MCF 10A (cell line): ENCODE measurements at regions of chr22 and their contacts with region 1.

Region 1: GRCh38 chr22:50341977-50342650 is 1.0 kb upstream of the PPP6R2 start:
- DNase-seq: peak; percentile 90
- H3K4me3 Mint-ChIP-seq: peak overlapping the region; percentile 69
- H3K27ac Mint-ChIP-seq: no peak overlapping the region
- H3K4me1 Mint-ChIP-seq: no peaks in the 10 kb centered on the region
- H3K27me3 Mint-ChIP-seq: no peaks in the 10 kb centered on the region
- CTCF ChIP-seq: peak; percentile 92

Region 2: GRCh38 chr22:50244420-50245213 is 97.5 kb before region 1 on chr22 and contains the start of gene TUBGCP6:
- CTCF ChIA-PET with region 1: interaction called, 19 read pairs
- POLR2A ChIA-PET with region 1: interaction called, 26 read pairs
- intact Hi-C with region 1: loop called (anchors 1 kb)
- DNase-seq: peak; percentile 91
- H3K4me3 Mint-ChIP-seq: peak within 1 kb of the TSS; percentile 96
- H3K27ac Mint-ChIP-seq: peak within 1 kb of the TSS; percentile 99
- H3K4me1 Mint-ChIP-seq: peaks cover 16% of the 10 kb centered on the region
- H3K27me3 Mint-ChIP-seq: no peaks in the 10 kb centered on the region
- CTCF ChIP-seq: no peak
- total RNA-seq, gene TUBGCP6: 27.6 and 27.9 TPM in 2 replicates

Region 3: GRCh38 chr22:50269970-50270665 is 72.0 kb before region 1 on chr22 and contains the start of gene MAPK11:
- CTCF ChIA-PET with region 1: interaction called, 7 read pairs
- POLR2A ChIA-PET with region 1: interaction called, 8 read pairs
- intact Hi-C with region 1: loop called (anchors 1 kb)
- DNase-seq: no peak
- H3K4me3 Mint-ChIP-seq: peak within 1 kb of the TSS; percentile 60
- H3K27ac Mint-ChIP-seq: no peak within 1 kb of the TSS
- H3K4me1 Mint-ChIP-seq: peaks cover 12% of the 10 kb centered on the region
- H3K27me3 Mint-ChIP-seq: no peaks in the 10 kb centered on the region
- CTCF ChIP-seq: no peak
- total RNA-seq, gene MAPK11: 10.4 and 11.9 TPM in 2 replicates

Region 4: GRCh38 chr22:50282361-50282760 is 59.8 kb before region 1 on chr22:
- CTCF ChIA-PET with region 1: interaction called, 11 read pairs
- POLR2A ChIA-PET with region 1: no interaction called
- intact Hi-C with region 1: loop called (anchors 2 kb)
- DNase-seq: peak; percentile 84
- H3K4me3 Mint-ChIP-seq: peak overlapping the region; percentile 44
- H3K27ac Mint-ChIP-seq: no peak overlapping the region
- H3K4me1 Mint-ChIP-seq: peaks cover 4% of the 10 kb centered on the region
- H3K27me3 Mint-ChIP-seq: no peaks in the 10 kb centered on the region
- CTCF ChIP-seq: no peak

Region 5: GRCh38 chr22:50326959-50327710 is 15.0 kb before region 1 on chr22 and contains the start of gene DENND6B:
- CTCF ChIA-PET with region 1: interaction called, 22 read pairs
- POLR2A ChIA-PET with region 1: interaction called, 3 read pairs
- intact Hi-C with region 1: no loop called
- DNase-seq: peak; percentile 68
- H3K4me3 Mint-ChIP-seq: peak within 1 kb of the TSS; percentile 84
- H3K27ac Mint-ChIP-seq: peak within 1 kb of the TSS; percentile 49
- H3K4me1 Mint-ChIP-seq: peaks cover 18% of the 10 kb centered on the region
- H3K27me3 Mint-ChIP-seq: no peaks in the 10 kb centered on the region
- CTCF ChIP-seq: peak; percentile 42
- total RNA-seq, gene DENND6B: 4.0 and 5.5 TPM in 2 replicates

Region 6: DNA sequence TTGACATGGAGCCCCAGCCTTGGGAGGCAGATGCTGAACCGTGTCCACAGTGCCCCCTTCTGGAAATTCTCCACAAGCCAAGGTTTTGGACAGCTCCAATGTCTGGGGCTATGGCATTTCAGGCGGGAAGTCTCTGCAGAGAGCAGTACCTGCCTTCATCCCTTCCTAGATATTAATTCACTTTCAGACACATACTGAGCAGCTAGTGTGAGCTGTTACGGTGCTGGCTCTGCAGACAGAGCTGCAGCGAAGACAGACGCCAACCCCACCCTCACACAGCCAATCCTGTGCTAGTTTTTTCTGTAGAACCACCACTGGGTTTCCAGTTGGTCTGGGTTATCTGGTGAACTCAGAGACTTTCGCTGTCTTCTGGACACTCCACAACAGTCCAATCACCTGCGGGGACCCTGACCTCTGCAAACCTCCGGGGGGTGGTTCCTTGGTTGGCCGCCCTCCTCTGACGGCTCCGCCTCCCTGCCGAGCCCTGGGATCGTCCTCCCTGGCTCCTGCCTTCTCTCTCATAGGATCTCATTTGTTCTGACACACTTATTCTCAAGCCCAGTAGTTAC is 156.3 kb after region 1 on chr22:
- CTCF ChIA-PET with region 1: no interaction called
- POLR2A ChIA-PET with region 1: no interaction called
- intact Hi-C with region 1: no loop called
- DNase-seq: peak; percentile 84
- H3K4me3 Mint-ChIP-seq: no peak overlapping the region
- H3K27ac Mint-ChIP-seq: no peak overlapping the region
- H3K4me1 Mint-ChIP-seq: peaks cover 7% of the 10 kb centered on the region
- H3K27me3 Mint-ChIP-seq: no peaks in the 10 kb centered on the region
- CTCF ChIP-seq: peak; percentile 64